ENCODE measurements at regions of chr9 and their contacts with region 1.

Region 1: GRCh38 chr9:84748112-84748511 is 78.6 kb downstream of the NTRK2 start:
- DNase-seq: no peak
- H3K4me3 ChIP-seq: no peak overlapping the region
- CTCF ChIP-seq: no peak

Region 2: DNA sequence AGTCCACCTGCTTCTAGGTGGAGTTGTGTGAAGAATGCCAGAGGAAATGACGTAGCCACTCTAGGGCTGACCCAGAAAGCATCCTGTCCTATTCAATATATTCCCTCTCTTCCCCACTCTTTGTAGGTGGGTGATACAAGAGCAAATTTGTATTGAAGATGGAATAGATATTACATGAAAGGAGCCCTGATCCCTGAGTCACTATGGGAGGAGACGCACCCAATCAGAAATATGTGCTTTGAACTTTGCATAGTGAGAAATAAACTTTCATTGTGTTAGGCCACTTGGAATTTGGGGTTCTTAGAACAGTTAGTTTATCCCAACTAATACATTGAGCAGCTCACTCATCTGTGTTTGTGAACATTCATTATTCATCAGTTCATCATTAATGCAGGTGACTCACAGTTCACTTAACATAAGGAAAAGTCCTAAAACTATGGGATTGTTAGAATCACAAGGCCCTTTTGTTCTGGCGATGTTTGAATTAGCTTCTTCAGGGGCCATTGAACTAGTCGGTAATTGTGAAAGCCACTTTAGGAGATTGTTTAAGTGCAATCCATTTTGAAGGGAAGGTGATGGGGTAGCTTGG is 105.5 kb before region 1 on chr9:
- in situ Hi-C with region 1: loop called (anchors 25 kb)
- DNase-seq: no peak
- H3K4me3 ChIP-seq: no peak overlapping the region
- CTCF ChIP-seq: no peak

Region 3: DNA sequence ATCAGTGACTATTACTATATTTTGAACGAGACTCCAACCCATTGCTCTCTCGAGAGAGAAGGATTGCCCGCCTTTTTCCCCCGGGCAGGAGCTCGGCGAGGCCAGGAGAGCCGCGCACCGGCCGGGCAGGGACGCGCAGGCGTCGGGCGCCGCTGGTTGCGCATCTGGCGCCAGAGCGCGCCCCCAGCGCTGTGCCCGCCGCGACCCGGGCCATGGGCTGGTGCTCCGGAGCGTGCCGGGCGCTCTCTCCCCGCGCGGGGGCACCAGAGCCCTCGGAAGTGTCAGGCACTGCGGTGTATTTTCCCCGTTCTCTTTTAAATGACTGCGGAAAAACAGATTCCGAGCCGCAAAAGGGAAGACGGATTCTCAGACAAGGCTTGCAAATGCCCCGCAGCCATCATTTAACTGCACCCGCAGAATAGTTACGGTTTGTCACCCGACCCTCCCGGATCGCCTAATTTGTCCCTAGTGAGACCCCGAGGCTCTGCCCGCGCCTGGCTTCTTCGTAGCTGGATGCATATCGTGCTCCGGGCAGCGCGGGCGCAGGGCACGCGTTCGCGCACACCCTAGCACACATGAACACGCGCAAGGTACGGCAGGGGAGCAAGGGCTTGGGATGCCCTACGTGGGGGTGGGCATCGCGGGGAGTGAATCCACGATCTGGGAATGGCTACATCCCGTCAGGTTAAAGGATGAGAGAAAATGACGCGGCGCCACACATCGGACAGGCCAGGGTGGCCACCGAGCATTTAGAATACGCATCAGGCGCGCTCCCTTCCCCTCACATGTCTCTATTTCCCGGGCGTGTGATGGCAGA is 79.7 kb before region 1 on chr9:
- in situ Hi-C with region 1: no loop called
- DNase-seq: peak; percentile 31
- H3K4me3 ChIP-seq: peak overlapping the region; percentile 42
- CTCF ChIP-seq: peak; percentile 57